GM13977 (cell line): ENCODE measurements at regions of chr14 and their contacts with region 1.

Region 1: DNA sequence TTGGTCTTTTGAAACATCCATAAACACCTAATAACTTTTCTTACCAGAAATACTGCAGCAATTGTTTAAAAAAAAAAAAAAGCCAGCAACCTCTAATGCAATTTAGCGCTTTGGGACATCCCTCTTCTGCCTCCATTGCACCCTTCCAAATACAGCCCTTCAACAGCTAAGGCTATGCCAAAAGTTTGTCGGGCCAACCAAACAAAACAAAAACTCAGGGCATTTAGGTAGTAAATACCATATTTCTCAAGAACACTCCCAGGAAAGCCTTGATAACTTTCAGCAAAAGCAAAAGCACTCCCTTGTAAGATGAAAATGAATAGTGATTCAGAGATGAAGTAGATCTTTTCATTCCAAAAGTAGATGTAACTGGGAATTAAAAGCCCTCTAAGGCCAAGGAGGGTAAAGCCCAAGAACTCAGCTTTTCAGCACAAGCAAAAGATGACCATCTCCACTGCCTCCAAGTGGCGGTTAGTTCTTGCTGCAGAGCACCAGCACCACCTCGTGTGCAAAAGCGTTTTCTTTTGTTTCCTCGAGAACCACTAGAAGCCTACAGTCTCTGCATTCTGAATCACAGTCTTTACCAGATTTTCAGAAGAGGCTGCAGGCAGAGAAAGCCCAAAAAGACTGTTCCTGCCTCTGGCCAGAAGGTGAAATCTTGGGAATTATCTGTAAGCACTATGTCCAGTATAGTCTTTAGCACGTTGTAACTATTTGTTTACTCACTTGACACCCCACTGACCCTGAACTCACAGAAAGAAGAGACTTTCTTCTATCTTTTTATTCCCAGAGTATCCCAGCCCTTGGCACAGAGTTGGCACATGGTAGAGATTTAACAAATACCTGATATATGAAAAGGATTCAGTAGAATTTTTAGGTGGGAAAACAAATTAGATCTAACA is 53.1 kb downstream of the SIX6 start:
- DNase-seq: peak; percentile 39
- CTCF ChIP-seq: peak; percentile 82

Region 2: GRCh38 chr14:60064491-60065072 is 497.5 kb before region 1 on chr14:
- in situ Hi-C with region 1: loop called (anchors 25 kb)
- DNase-seq: peak; percentile 39
- CTCF ChIP-seq: peak; percentile 51

Region 3: DNA sequence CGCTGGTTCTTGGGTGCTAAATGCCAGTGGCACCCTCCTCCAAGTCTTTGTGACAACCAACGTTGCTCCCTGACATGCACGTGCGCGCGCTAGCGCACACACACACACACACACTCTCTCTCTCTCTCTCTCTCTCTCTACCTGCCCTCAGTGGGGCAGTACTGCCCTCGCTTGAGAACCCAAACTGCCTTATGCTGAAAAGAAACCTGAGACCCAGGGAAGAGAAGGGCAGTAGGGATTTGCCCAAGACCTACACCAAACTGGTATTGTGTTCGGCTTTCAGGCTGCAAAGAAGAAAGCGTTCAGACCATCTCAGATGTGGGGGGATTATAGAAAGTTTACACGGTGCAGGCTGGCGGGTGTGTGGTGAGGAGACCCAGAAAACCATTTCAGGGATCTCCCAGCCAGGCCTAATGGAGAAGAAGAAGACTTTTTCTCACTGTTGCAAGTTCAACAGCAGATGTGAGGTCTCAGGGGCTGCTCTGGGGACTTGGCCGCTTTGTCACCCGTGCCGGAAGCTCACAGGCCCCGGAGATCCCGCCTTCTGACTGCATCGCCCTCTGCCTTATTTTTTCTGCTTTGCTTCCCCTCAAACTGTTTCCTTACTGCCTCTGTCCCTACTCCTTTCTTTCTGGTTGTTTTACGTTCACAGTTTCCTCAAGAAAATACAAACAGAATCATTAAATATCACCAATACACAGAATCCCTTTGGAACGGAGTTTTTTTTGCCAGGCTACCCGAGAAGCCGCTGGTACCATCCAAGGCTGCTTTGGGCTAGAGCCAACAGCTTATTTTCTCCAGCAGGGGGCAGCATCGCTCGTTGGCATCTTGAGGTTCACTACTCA is 230.7 kb before region 1 on chr14:
- in situ Hi-C with region 1: loop called (anchors 10 kb)
- DNase-seq: peak; percentile 66
- CTCF ChIP-seq: peak; percentile 82